ENCODE measurements at regions of chr6 and their contacts with region 1.

Region 1: DNA sequence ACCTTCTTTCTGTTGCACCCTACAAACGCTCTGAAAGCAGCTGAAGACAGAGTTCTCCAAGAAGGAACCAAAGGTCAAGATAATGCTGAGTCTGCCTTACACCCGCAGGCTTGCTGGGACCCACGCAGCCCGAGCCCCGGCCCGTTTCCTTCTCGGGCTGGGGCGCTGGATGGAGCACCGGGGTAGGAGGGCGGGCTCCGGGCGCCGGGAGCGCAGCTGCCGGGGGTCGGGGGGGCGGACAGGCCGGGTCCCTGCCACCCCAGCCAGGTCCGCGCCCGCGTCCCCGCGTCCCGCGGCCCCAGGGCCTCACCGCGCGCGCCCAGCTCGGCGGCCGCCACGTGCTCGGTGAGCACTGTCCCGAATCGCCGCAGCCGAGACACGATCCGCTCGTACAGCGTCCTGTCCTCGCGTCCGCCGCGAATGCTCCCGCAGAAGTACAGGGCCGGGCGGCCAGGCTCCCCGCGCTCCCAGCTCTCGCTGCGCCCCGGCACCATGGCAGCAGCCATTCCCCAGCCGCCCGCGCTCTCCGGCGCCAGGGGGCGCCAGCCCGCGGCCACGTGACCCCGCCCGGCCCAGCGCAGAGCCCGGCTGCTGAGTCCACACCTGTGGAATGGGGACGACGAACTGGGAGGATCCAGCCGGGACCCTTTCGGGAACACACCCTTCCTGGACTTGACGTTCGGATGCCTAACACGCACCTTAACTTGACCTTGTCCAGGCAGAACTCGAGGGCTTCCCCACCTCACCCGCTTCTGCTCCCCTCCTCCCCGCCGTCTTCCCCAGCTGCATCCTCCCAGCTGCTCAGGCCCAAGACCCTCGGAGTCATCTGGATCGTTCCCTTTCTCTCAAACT is at the start of gene DNPH1:
- DNase-seq: peak; percentile 87
- CTCF ChIP-seq: peak; percentile 93

Region 2: DNA sequence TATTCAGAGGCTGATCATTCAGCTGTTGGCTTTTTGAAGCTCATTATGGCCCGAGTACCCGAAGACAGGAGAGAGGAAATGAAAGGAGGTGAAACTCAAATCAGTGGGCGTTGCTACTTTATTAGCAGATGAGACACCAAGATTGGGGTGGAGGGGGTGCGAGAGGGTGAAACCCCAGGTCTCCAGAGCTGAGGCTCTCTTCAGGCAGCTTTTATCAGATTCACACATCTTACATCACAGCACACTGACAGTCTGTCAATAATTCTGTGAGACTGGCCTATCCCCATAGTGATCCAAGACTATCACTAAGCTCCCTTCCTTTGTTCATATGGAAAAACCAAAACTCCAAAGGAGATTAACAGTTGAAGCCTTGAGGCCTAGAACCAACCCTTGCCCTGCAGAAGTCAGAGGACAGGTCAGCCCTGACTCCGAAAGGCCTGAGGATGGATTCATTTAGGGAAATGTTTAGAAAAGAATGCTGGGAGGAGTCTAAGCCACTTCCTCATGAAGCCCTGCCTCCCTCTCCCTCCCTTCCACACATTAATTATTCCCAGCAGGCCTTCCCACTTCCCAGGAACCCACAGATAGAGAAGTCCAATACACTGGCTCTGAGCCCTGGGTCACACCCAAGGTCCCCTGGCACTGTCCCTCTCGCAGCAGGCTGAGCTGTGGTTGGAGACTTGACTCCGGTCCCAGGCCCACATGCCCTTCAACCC is 800.7 kb before region 1 on chr6:
- CTCF ChIA-PET with region 1: no interaction called
- POLR2A ChIA-PET with region 1: no interaction called
- DNase-seq: peak; percentile 82
- CTCF ChIP-seq: no peak

Region 3: DNA sequence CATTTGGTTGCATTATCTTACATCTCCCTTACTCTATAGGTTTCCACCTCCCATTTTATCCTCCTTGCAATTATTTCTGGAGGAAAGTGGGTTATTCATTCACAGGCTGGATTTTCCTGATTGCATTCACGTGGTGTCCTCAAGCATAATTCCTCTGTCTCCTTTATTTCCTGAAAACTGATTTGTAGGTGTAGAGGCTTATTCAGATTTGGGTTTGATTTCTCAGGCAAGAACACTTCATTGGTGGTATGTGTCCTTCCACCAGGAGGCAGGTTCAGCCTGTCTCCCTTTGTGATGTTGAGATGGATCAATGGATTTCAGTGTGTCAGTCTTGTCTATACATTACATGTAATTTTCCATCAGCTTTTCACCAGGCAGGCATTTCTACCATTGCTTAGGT is 17.2 kb before region 1 on chr6:
- CTCF ChIA-PET with region 1: interaction called, 36 read pairs
- POLR2A ChIA-PET with region 1: interaction called, 3 read pairs
- DNase-seq: no peak
- CTCF ChIP-seq: no peak

Region 4: DNA sequence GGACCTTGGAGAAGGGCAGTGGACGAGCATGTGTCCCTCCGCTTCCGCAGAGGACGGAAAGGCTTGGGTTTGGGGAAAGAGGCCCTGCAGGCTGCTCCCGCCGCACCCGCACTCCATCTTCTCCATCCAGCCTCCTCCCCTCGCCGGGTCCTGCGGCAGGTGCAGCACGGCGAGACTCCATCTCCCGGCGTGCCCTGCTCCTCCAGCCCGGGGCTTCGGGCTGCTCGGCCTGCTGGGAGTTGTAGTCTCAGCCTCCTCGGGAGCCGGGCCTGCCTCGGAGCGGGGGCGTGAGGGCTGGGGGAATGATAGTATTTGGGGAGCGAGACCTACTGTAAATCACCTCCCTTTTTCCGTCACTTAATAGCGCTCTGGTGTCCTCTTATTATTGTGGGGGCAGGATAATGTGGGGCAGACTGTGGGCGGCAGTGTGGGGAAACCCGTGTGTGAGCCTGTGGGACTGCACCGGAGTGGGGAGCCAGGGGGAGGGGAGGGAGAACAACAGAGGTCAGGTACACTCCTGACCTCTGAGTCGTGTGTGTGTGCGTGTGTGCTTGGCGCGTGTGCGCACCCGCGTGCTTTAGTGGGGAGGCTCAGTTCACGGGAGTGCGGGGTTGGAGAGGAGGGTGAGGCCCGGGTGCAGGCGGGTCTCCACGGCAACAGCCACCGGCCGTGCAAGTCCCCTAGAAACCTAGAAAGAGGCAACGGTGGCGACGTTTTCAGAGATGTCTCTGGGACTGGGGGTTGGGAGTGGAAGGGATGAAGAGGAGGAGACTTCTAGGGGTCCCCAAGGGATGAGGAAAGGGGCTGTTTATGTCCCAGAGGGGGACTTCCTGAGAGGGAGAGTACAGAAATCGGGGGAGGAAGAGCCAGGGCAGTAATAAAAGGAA is 18.2 kb after region 1 on chr6:
- CTCF ChIA-PET with region 1: interaction called, 25 read pairs
- POLR2A ChIA-PET with region 1: no interaction called
- DNase-seq: peak; percentile 97
- CTCF ChIP-seq: no peak

Region 5: GRCh38 chr6:43402820-43403219 is 173.6 kb after region 1 on chr6:
- CTCF ChIA-PET with region 1: interaction called, 11 read pairs
- POLR2A ChIA-PET with region 1: no interaction called
- DNase-seq: no peak
- CTCF ChIP-seq: no peak

Measured in GM10248 (cell line).